ENCODE measurements at regions of chr10 and their contacts with region 1.

Region 1: DNA sequence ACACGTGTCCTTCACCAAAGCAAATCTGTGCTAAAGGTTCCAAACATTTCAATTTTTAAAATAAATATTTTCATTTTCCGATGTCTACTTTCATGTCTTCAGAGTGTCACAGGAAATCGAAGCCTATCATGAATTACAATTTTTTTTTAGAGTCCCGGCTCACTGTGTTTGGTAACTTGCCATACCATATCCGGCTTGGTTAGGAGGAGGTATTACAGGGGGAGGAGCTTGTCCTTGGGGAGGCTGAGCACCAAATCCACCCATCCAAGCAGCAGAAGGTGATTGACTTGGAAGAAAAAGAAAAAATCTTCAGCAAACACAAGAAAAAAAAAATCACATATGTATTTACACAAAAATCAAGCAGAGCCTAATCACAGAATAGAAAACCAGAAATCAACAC is 21.3 kb downstream of the TIAL1 start:
- DNase-seq: peak; percentile 34
- ATAC-seq: no peak
- H3K4me3 ChIP-seq: no peak overlapping the region
- H3K27ac ChIP-seq: no peak overlapping the region
- H3K4me1 ChIP-seq: no peaks in the 10 kb centered on the region
- H3K27me3 ChIP-seq: no peaks in the 10 kb centered on the region
- CTCF ChIP-seq: no peak
- POLR2A ChIP-seq: no peak
- RAD21 ChIP-seq: no peak

Region 2: DNA sequence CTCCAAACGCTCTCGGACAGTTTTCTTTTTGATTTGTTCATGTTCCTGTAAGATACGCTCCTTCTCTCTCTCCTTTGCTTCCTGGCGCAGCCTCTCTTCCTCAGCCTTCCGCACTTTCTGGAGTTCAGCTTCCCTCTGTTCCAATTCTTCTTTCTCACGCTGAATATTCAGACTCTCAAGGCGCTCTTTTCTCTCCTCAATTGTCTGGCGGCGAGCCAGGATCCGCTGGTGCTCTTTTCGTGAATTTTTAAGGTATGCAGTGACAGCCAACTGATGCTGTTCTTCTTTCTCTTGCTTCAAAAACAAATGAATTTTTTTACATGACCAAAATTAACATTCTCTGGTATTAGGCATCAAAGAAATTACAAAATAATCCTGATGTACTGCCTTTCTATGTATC is 517.5 kb before region 1 on chr10:
- CTCF ChIA-PET with region 1: interaction called, 3 read pairs
- POLR2A ChIA-PET with region 1: no interaction called
- dilution Hi-C with region 1: no loop called
- in situ Hi-C with region 1: no loop called
- intact Hi-C with region 1: loop called (anchors 5 kb)
- DNase-seq: no peak
- ATAC-seq: no peak
- H3K4me3 ChIP-seq: no peak overlapping the region
- H3K27ac ChIP-seq: no peak overlapping the region
- H3K4me1 ChIP-seq: no peaks in the 10 kb centered on the region
- H3K27me3 ChIP-seq: no peaks in the 10 kb centered on the region
- CTCF ChIP-seq: no peak
- POLR2A ChIP-seq: no peak
- RAD21 ChIP-seq: no peak

Region 3: DNA sequence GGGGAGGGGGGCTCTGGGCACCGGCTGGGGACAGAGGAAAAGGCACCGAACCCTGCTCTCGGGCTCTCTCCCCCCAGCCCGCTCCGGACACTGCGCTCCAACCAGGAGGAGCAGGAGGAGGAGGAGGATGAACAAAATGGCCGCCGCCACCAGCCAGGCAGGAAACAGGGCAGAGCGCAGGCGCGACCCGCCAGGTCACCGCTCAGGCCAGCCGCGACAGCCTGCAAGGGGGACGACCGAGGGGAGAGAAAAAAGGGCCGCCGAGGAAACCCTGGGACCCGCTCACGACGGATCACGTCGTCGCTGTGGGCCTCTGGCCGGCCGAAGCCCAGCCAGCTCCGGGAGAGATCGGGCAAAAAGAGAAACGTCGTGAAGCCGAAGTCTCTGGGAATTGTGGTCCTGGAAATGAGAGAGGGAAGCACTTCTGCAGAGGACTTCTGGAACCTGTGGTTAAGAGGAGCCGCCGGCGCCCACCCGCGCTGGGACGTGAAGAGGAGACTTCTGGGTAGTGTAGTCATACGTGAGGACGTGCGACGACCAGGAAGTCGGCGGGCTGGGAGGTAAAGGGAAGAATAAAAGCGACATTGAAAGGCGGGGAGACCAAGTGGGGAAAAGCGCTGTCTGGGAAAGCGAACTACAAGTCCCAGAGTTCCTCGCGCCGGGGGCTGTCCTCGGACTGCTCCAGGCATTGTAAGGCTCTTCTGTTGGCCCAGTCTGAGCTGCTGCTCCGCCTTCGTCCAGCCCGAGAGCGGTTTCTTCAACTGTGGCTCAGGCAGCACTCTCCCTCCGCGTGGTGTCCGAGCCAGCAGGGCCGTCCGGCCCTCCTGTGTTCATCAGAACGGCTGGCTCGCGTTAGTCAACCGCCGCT is 21.3 kb after region 1 on chr10 and contains the start of gene TIAL1:
- CTCF ChIA-PET with region 1: no interaction called
- POLR2A ChIA-PET with region 1: no interaction called
- dilution Hi-C with region 1: no loop called
- in situ Hi-C with region 1: no loop called
- intact Hi-C with region 1: loop called (anchors 2 kb)
- DNase-seq: peak; percentile 99
- ATAC-seq: peak; percentile 87
- H3K4me3 ChIP-seq: peak within 1 kb of the TSS; percentile 78
- H3K27ac ChIP-seq: peak within 1 kb of the TSS; percentile 96
- H3K4me1 ChIP-seq: peaks cover 5% of the 10 kb centered on the region; the same call in 1 of the 2 replicates
- H3K27me3 ChIP-seq: no peaks in the 10 kb centered on the region
- CTCF ChIP-seq: no peak
- POLR2A ChIP-seq: peak; percentile 71
- RAD21 ChIP-seq: no peak
- total RNA-seq, gene TIAL1: 28.0 and 44.2 TPM in 2 replicates